Heart left ventricle (tissue), 16 donors: ENCODE measurements at regions of chr6 and their contacts with region 1.

Region 1: GRCh38 chr6:22420943-22421600 is 124.2 kb upstream of the PRL start:
- DNase-seq: no peak
- ATAC-seq: no peak
- H3K4me3 ChIP-seq: no peak overlapping the region
- H3K27ac ChIP-seq: no peak overlapping the region
- H3K4me1 ChIP-seq: no peaks in the 10 kb centered on the region
- H3K27me3 ChIP-seq: no peaks in the 10 kb centered on the region
- CTCF ChIP-seq: no peak
- POLR2A ChIP-seq: no peak

Region 2: GRCh38 chr6:21240709-21241108 is 1180.4 kb before region 1 on chr6:
- intact Hi-C with region 1: loop called in 1 of 10 experiments (anchors 10 kb)
- DNase-seq: no peak
- ATAC-seq: no peak
- H3K4me3 ChIP-seq: no peak overlapping the region
- H3K27ac ChIP-seq: no peak overlapping the region
- H3K4me1 ChIP-seq: no peaks in the 10 kb centered on the region
- H3K27me3 ChIP-seq: no peaks in the 10 kb centered on the region
- CTCF ChIP-seq: no peak
- POLR2A ChIP-seq: no peak